Ovary (tissue), 10 donors: ENCODE measurements at regions of chr6 and their contacts with region 1.

Region 1: DNA sequence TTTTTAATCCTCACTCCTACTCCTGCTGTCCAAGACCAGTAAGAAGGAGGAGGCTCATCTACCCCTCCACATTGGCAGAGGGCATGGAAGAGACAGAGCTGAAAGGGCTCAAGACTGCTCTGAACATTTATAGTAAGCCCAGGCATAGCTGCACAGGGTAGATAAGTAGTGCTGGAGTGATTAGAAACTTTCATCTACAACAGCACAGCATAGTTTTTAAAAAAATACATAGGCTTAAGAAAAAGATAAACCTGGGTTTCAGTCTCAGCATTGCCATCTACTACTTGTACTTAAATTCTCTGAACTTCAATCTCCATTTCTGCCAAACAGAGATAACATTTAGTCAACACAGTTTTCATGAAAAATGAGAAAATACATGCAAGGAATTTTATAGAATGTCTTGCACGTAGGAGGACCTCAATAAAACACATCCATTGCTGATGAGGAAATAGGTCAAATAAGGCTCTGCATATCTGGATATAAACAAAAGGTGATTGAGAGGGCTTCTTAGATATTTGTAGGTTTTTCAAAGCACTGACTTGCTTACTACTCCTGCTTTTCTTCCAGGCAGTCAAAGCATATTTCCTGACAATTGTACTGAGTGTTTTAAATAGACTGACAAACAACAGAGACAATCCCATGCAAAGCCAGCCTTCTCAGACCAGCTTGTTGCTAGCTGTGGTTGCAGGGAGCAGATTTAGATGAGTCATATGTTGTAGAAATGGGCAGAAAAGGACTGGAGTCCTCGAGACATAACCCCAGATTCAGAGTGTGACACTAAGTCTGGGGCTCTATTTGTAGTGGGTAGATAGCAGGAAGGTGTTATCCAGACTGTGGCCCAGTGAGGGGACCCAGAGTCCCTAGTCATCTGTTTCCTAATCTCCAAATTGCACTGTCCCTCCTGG is 107.4 kb upstream of the TAB2 start:
- DNase-seq: no peak
- H3K4me3 ChIP-seq: no peak overlapping the region
- H3K27ac ChIP-seq: no peak overlapping the region
- H3K4me1 ChIP-seq: peaks cover 3% of the 10 kb centered on the region
- H3K27me3 ChIP-seq: no peaks in the 10 kb centered on the region
- CTCF ChIP-seq: no peak
- EP300 ChIP-seq: no peak
- POLR2A ChIP-seq: no peak

Region 2: GRCh38 chr6:148884461-148884860 is 325.7 kb before region 1 on chr6:
- intact Hi-C with region 1: loop called in 1 of 4 experiments (anchors 5 kb)
- DNase-seq: no peak
- H3K4me3 ChIP-seq: no peak overlapping the region
- H3K27ac ChIP-seq: no peak overlapping the region
- H3K4me1 ChIP-seq: peaks cover 12% of the 10 kb centered on the region
- H3K27me3 ChIP-seq: no peaks in the 10 kb centered on the region
- CTCF ChIP-seq: no peak
- EP300 ChIP-seq: no peak
- POLR2A ChIP-seq: no peak

Region 3: GRCh38 chr6:149342525-149342924 is 132.4 kb after region 1 on chr6:
- intact Hi-C with region 1: no loop called
- DNase-seq: no peak
- H3K4me3 ChIP-seq: no peak overlapping the region
- H3K27ac ChIP-seq: no peak overlapping the region
- H3K4me1 ChIP-seq: peaks cover 5% of the 10 kb centered on the region
- H3K27me3 ChIP-seq: no peaks in the 10 kb centered on the region
- CTCF ChIP-seq: no peak
- EP300 ChIP-seq: no peak
- POLR2A ChIP-seq: no peak